Activated CD8-positive, alpha-beta memory T cell treated with anti-CD3 and anti-CD28 coated beads, Interleukin-2, amount 10 ng/mL, durations not matched to agents 7 days and 5 days (primary cell): ENCODE measurements at regions of chr19 and their contacts with region 1.

Region 1: GRCh38 chr19:18388100-18388959 is 2.4 kb downstream of the GDF15 start:
- DNase-seq: peak; percentile 86
- ATAC-seq: peak; percentile 88
- H3K4me3 Mint-ChIP-seq: peak overlapping the region; percentile 66
- H3K27ac Mint-ChIP-seq: no peak overlapping the region
- H3K4me1 Mint-ChIP-seq: peaks cover 25% of the 10 kb centered on the region
- H3K27me3 Mint-ChIP-seq: peaks cover 59% of the 10 kb centered on the region

Region 2: DNA sequence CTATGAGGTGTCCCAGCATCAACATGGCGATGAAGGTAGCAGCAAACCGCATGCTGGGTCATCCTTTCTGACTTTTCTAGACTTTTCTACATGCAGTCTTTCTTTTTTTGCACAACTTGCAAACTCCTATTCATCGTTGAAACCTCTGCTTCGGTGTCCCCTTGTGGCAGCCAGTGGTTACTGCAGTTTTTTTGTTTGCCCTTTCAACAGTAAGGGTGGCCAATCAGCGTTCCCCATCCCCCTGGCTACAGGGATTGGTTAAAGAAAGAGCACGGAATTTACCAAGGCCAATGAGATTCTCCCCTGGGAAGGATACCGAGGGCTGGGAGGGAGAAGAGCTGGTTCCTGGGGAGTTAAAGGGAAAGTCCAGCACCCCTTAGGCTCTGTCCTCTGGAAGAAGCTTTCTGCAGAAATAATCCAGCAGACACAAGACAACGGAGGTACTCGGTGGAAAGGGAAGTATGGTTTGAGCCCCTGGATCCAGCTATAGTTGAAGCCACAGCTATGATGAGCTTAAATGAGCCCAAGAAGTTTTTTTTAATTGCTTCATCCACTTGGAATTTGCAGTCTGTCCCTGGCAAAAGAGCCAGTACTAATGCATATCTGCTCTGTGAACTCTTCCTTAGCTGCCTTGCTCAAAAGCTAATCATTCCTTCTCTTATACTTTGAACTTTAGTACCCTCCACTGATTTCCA is 59.8 kb before region 1 on chr19:
- CTCF ChIA-PET with region 1: interaction called, 19 read pairs
- DNase-seq: peak; percentile 95
- ATAC-seq: peak; percentile 100
- H3K4me3 Mint-ChIP-seq: peak overlapping the region; percentile 66
- H3K27ac Mint-ChIP-seq: peak overlapping the region; percentile 29
- H3K4me1 Mint-ChIP-seq: peaks cover 23% of the 10 kb centered on the region
- H3K27me3 Mint-ChIP-seq: no peaks in the 10 kb centered on the region

Region 3: DNA sequence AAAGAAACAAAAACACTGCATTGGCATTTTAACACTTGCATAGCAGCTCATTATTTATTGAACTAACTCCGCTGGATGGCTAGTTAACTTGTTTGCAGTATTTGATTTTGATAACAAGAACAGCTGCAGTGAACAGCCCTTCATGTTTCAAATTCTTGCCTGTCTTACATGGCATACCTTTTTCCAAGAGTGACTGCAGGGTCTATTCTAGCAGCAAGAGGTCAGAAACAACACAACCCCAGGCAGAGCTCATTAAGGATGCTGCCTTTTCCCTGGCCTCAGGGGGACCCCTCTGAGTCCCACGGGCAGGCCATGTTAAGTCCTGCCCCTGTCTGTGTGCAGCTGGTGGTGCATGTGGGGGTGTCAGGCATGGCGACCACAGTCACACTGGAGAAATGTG is 31.3 kb before region 1 on chr19:
- CTCF ChIA-PET with region 1: interaction called, 11 read pairs
- DNase-seq: no peak
- ATAC-seq: no peak
- H3K4me3 Mint-ChIP-seq: no peak overlapping the region
- H3K27ac Mint-ChIP-seq: no peak overlapping the region
- H3K4me1 Mint-ChIP-seq: no peaks in the 10 kb centered on the region
- H3K27me3 Mint-ChIP-seq: no peaks in the 10 kb centered on the region

Region 4: GRCh38 chr19:18373892-18374629 is 14.3 kb before region 1 on chr19:
- CTCF ChIA-PET with region 1: interaction called, 28 read pairs
- DNase-seq: peak; percentile 95
- ATAC-seq: peak; percentile 92
- H3K4me3 Mint-ChIP-seq: peak overlapping the region; percentile 27
- H3K27ac Mint-ChIP-seq: peak overlapping the region; percentile 76
- H3K4me1 Mint-ChIP-seq: peaks cover 21% of the 10 kb centered on the region
- H3K27me3 Mint-ChIP-seq: no peaks in the 10 kb centered on the region

Region 5: DNA sequence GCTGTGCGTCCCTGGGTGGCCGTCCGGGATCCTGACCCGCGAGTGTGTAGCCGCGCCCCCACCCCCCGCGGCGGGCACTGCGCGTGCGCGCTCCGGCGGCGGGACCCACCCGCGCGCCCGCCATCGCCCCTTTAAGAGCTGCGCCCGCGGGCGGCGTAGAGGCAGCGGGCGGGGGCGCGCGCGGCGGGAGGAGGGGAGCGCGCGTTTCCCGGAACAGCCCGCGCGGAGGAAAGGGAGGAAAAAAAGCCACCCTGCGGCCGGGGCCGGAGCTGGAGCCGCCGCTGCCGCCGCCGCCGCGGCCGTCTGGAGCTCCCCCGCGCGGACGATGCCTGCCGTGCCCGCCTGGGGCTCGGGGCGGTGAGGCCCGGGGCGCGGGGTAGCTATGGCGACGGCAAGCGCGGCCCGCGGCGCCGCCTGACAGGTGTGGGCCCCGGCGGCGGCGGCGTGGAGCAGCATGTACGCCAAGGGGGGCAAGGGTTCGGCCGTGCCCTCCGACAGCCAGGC is 30.9 kb after region 1 on chr19 and contains the start of gene SSBP4:
- CTCF ChIA-PET with region 1: interaction called, 278 read pairs
- DNase-seq: peak; percentile 79
- ATAC-seq: peak; percentile 31
- H3K4me3 Mint-ChIP-seq: peak within 1 kb of the TSS; percentile 97
- H3K27ac Mint-ChIP-seq: peak within 1 kb of the TSS; percentile 93
- H3K4me1 Mint-ChIP-seq: peaks cover 81% of the 10 kb centered on the region
- H3K27me3 Mint-ChIP-seq: peaks cover 3% of the 10 kb centered on the region
- total RNA-seq, gene SSBP4: 197 to 247 TPM